GM12878 (cell line): ENCODE measurements at regions of chr2 and their contacts with region 1.

Region 1: GRCh38 chr2:7825591-7826312 is 856.1 kb upstream of the ID2 start:
- DNase-seq: peak; percentile 78
- ATAC-seq: peak; percentile 97
- H3K4me3 ChIP-seq: no peak overlapping the region
- H3K27ac ChIP-seq: peak overlapping the region; percentile 75
- H3K4me1 ChIP-seq: peaks cover 10% of the 10 kb centered on the region
- H3K27me3 ChIP-seq: no peaks in the 10 kb centered on the region
- CTCF ChIP-seq: no peak
- EP300 ChIP-seq: peak; percentile 94 to 98
- POLR2A ChIP-seq: no peak
- RAD21 ChIP-seq: peak; percentile 19; the same call in 1 of the 2 replicates

Region 2: GRCh38 chr2:7744827-7745226 is 80.9 kb before region 1 on chr2:
- CTCF ChIA-PET with region 1: no interaction called
- POLR2A ChIA-PET with region 1: no interaction called
- RAD21 ChIA-PET with region 1: no interaction called
- SMC1A ChIA-PET with region 1: no interaction called
- in situ Hi-C with region 1: no loop called
- intact Hi-C with region 1: no loop called
- DNase-seq: no peak
- ATAC-seq: peak; percentile 79
- H3K4me3 ChIP-seq: no peak overlapping the region
- H3K27ac ChIP-seq: no peak overlapping the region
- H3K4me1 ChIP-seq: peaks cover 3% of the 10 kb centered on the region; the same call in 1 of the 2 replicates
- H3K27me3 ChIP-seq: no peaks in the 10 kb centered on the region
- CTCF ChIP-seq: no peak
- EP300 ChIP-seq: no peak
- POLR2A ChIP-seq: no peak
- RAD21 ChIP-seq: no peak

Region 3: DNA sequence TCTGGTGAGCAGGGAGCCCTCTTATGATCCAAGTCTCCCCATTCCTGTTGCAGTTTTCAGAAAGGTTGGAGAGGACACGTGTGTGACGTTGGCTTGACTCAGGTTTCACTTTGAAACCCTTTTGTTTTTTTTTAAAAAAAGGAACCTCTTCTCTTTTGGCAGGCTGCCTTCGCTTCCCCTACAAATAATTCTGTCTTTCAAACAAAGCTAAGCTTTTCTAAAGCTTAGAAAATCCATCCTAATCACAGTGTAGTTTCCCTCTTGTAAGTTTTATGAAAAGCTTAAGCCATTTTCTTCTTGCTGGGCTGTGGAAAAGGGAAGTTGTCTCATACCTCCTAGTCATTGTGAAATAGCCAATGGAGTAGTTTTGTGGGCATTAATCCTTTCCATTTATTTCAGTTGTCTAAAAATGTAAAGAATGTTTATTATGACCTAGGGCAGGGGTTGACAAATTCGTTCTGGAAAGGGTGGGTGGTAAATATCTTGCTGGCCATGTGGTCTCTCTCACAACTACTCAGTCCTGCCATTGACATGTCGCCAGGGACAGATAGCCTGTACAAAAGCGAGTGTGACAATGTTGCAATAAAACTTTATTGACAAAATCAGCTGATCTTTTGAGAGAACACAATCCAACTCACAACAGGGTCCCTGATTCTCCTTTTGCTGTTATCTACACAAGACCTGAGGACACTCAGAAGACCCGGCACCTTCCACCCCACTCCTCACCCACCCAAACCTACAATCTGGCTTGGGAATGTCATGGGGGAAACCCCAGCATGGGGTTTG is 29.8 kb before region 1 on chr2:
- CTCF ChIA-PET with region 1: no interaction called
- POLR2A ChIA-PET with region 1: no interaction called
- RAD21 ChIA-PET with region 1: no interaction called
- SMC1A ChIA-PET with region 1: no interaction called
- in situ Hi-C with region 1: no loop called
- intact Hi-C with region 1: no loop called
- DNase-seq: no peak
- ATAC-seq: peak; percentile 49
- H3K4me3 ChIP-seq: no peak overlapping the region
- H3K27ac ChIP-seq: no peak overlapping the region; the same call in 1 of the 2 replicates
- H3K4me1 ChIP-seq: no peaks in the 10 kb centered on the region
- H3K27me3 ChIP-seq: no peaks in the 10 kb centered on the region
- CTCF ChIP-seq: no peak
- EP300 ChIP-seq: no peak
- POLR2A ChIP-seq: no peak
- RAD21 ChIP-seq: no peak

Region 4: GRCh38 chr2:7835693-7836680 is 10.2 kb after region 1 on chr2:
- CTCF ChIA-PET with region 1: no interaction called
- POLR2A ChIA-PET with region 1: interaction called, 3 read pairs
- RAD21 ChIA-PET with region 1: interaction called, 7 read pairs
- SMC1A ChIA-PET with region 1: interaction called, 17 read pairs
- in situ Hi-C with region 1: no loop called
- intact Hi-C with region 1: no loop called
- DNase-seq: peak; percentile 64
- ATAC-seq: peak; percentile 98
- H3K4me3 ChIP-seq: no peak overlapping the region
- H3K27ac ChIP-seq: no peak overlapping the region
- H3K4me1 ChIP-seq: peaks cover 14% of the 10 kb centered on the region
- H3K27me3 ChIP-seq: no peaks in the 10 kb centered on the region
- CTCF ChIP-seq: no peak
- EP300 ChIP-seq: peak in 1 of 2 experiments; percentile 42; a peak in 1 of 4 replicates
- POLR2A ChIP-seq: no peak
- RAD21 ChIP-seq: no peak

Region 5: DNA sequence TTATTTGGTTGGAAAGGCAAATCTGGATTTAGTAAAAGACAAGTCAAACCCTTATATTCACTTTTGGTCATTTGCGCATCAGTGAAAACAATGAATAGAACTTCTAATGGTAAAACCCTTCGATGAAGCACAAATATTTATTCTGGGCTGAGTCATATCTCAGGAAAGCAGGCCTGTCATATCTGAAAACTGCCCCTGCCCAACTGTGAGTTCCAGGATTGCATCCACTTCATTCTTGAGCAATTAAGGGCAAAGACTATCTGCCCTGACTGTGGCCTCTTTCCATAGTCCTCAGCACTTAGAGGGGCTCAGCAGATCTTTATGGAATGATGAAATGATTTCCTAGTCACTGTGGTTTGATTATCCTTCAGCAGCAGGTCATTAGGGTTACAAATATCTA is 60.9 kb after region 1 on chr2:
- CTCF ChIA-PET with region 1: no interaction called
- POLR2A ChIA-PET with region 1: no interaction called
- RAD21 ChIA-PET with region 1: no interaction called
- SMC1A ChIA-PET with region 1: no interaction called
- in situ Hi-C with region 1: no loop called
- intact Hi-C with region 1: no loop called
- DNase-seq: no peak
- ATAC-seq: no peak
- H3K4me3 ChIP-seq: no peak overlapping the region
- H3K27ac ChIP-seq: no peak overlapping the region
- H3K4me1 ChIP-seq: no peaks in the 10 kb centered on the region
- H3K27me3 ChIP-seq: no peaks in the 10 kb centered on the region
- CTCF ChIP-seq: no peak
- EP300 ChIP-seq: no peak
- POLR2A ChIP-seq: no peak
- RAD21 ChIP-seq: no peak

Region 6: DNA sequence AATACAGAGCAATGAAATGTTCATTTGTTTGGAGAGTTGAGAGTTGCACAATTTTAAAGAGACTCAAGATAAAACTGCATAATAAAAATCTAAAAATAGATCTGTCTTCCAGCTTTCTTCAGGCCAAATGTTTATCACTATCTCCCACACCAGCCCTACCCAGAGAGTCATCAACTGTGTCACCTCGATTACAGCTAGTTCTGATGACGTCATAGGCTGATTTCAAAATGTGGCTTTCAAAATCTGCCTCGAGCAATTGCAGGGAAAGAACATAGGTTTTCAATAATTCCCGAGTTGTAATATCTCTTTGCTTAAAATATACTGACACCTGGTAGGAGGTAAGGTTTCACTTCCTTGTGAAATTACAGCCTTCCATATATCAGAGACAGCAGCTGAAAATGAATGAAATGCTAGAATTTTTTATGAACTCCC is 178.5 kb after region 1 on chr2:
- CTCF ChIA-PET with region 1: no interaction called
- POLR2A ChIA-PET with region 1: interaction called, 3 read pairs
- RAD21 ChIA-PET with region 1: no interaction called
- SMC1A ChIA-PET with region 1: interaction called, 3 read pairs
- in situ Hi-C with region 1: no loop called
- intact Hi-C with region 1: loop called (anchors 2 kb)
- DNase-seq: no peak
- ATAC-seq: peak; percentile 46
- H3K4me3 ChIP-seq: no peak overlapping the region
- H3K27ac ChIP-seq: no peak overlapping the region
- H3K4me1 ChIP-seq: peaks cover 4% of the 10 kb centered on the region; the same call in 1 of the 2 replicates
- H3K27me3 ChIP-seq: no peaks in the 10 kb centered on the region
- CTCF ChIP-seq: no peak
- EP300 ChIP-seq: peak; percentile 69 to 79; a peak in 2 of 4 replicates
- POLR2A ChIP-seq: no peak
- RAD21 ChIP-seq: no peak